ENCODE measurements at regions of chr12 and their contacts with region 1.

Region 1: GRCh38 chr12:28535216-28535615 is 345.0 kb downstream of the CCDC91 start:
- DNase-seq: no peak
- H3K4me3 Mint-ChIP-seq: no peak overlapping the region
- H3K27ac Mint-ChIP-seq: no peak overlapping the region
- H3K4me1 Mint-ChIP-seq: peaks cover 6% of the 10 kb centered on the region
- H3K27me3 Mint-ChIP-seq: no peaks in the 10 kb centered on the region

Region 2: DNA sequence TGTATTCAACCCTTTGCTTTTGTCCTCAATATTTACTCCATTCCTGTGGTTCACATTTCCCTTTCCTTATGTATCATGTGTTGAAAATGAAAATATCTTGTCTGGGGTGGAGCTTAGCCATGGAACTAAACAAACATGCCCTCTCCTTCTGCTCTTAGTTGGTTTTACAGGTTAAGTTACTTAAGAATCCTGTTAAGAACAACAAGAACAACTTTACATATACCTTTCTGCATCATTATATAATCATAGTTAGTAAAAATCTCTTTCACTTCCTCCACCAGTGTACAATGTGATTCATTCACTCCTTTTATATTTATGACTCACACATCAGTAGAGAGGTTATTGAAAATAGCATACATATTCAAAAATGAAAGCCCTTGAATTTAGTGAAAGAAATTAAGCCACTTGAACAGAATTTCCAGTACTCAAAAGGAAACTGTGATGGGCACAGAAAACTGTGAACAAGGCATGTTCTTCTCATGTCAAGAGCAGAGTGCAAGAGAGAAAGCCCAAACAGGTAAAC is 37.3 kb before region 1 on chr12:
- intact Hi-C with region 1: loop called (anchors 2 kb)
- DNase-seq: no peak
- H3K4me3 Mint-ChIP-seq: no peak overlapping the region
- H3K27ac Mint-ChIP-seq: no peak overlapping the region
- H3K4me1 Mint-ChIP-seq: peaks cover 12% of the 10 kb centered on the region
- H3K27me3 Mint-ChIP-seq: no peaks in the 10 kb centered on the region

Region 3: GRCh38 chr12:28552251-28552970 is 17.2 kb after region 1 on chr12:
- intact Hi-C with region 1: loop called (anchors 1 kb)
- DNase-seq: no peak
- H3K4me3 Mint-ChIP-seq: no peak overlapping the region
- H3K27ac Mint-ChIP-seq: peak overlapping the region; percentile 78
- H3K4me1 Mint-ChIP-seq: peaks cover 9% of the 10 kb centered on the region
- H3K27me3 Mint-ChIP-seq: no peaks in the 10 kb centered on the region

Region 4: GRCh38 chr12:28563286-28563685 is 28.1 kb after region 1 on chr12:
- intact Hi-C with region 1: no loop called
- DNase-seq: no peak
- H3K4me3 Mint-ChIP-seq: no peak overlapping the region
- H3K27ac Mint-ChIP-seq: no peak overlapping the region
- H3K4me1 Mint-ChIP-seq: no peaks in the 10 kb centered on the region
- H3K27me3 Mint-ChIP-seq: peaks cover 1% of the 10 kb centered on the region

Measured in activated T-helper 1 cell treated with anti-CD3 and anti-CD28 coated beads, Interleukin-12 subunit alpha, Interleukin-12 subunit beta, Interleukin-2, Interleukin-4 antibody, amounts not matched to agents 30 ng/mL and 10 ng/mL and 1 ng/mL, durations not matched to agents 14 hours and 24 hours and 36 hours (primary cell).